ENCODE measurements at regions of chr20 and their contacts with region 1.

Region 1: DNA sequence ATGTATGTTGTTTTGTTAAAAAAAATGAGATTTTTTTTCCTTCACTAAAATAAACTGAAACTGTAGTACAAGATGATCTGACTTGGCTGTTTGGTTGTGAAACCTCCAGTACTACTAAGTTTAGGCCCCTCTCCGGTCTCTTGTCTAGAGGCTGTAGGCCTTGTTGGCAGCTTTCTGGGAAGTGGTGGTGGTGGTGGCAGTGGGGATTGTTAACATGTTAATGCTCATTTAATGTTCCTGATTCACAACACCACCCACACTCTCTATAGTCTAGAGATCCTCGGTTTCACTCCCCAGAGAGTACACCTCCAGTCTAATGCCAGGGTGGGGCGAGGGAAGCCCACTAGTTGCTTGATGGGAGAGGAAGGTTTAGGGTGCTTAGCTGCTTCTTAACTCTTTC is 24.1 kb downstream of the STK4 start:
- DNase-seq: peak; percentile 77
- H3K4me3 Mint-ChIP-seq: peak overlapping the region; percentile 83
- H3K27ac Mint-ChIP-seq: peak overlapping the region; percentile 93
- H3K4me1 Mint-ChIP-seq: peaks cover 63% of the 10 kb centered on the region
- H3K27me3 Mint-ChIP-seq: no peaks in the 10 kb centered on the region

Region 2: DNA sequence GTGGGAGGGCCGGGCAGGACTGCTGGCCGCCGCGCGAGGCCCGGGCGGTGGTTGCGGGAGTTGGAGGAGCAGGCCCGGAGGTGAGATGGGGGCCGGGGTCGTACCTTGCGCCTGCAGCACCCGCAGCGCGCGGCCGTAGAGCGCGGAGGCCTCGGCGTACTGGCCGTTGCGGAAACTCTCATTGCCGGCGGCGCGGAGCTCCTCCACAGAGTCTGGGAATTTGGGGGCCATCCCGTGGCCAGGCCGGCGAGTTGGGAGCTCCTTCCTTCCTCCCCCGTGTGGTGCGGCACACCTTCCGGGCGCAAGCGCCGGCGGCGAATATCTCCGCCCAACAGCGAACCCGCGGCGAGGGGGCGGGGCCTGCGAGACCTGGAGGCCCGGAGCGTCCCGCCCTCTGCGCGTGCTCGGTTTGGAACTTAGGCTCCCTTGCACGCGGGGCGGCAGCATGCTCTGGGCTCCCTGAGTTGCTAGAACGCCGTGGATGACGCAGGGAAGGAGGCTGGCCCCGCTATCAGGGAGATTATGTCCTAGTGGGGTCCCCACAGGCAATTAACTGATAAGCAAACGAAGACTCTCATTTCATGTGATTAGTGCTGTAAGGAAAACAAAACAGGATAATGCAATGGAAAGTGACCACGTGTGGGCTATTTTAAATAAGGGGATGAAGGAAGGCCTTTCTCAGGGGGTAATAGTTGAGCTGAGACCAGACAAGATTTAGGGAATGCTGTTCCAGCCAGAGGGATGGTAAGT is 30.1 kb before region 1 on chr20 and contains the start of gene TOMM34:
- intact Hi-C with region 1: loop called (anchors 1 kb)
- DNase-seq: peak; percentile 99
- H3K4me3 Mint-ChIP-seq: peak within 1 kb of the TSS; percentile 97
- H3K27ac Mint-ChIP-seq: peak within 1 kb of the TSS; percentile 99
- H3K4me1 Mint-ChIP-seq: peaks cover 62% of the 10 kb centered on the region
- H3K27me3 Mint-ChIP-seq: no peaks in the 10 kb centered on the region
- total RNA-seq, gene TOMM34: 63.4 and 64.5 TPM in 2 replicates

Region 3: GRCh38 chr20:44979090-44979621 is 11.3 kb before region 1 on chr20:
- intact Hi-C with region 1: loop called (anchors 1 kb)
- DNase-seq: peak; percentile 93
- H3K4me3 Mint-ChIP-seq: peak overlapping the region; percentile 78
- H3K27ac Mint-ChIP-seq: peak overlapping the region; percentile 96
- H3K4me1 Mint-ChIP-seq: peaks cover 74% of the 10 kb centered on the region
- H3K27me3 Mint-ChIP-seq: no peaks in the 10 kb centered on the region